Mucosa of descending colon (tissue), 3 donors: ENCODE measurements at regions of chr17 and their contacts with region 1.

Region 1: DNA sequence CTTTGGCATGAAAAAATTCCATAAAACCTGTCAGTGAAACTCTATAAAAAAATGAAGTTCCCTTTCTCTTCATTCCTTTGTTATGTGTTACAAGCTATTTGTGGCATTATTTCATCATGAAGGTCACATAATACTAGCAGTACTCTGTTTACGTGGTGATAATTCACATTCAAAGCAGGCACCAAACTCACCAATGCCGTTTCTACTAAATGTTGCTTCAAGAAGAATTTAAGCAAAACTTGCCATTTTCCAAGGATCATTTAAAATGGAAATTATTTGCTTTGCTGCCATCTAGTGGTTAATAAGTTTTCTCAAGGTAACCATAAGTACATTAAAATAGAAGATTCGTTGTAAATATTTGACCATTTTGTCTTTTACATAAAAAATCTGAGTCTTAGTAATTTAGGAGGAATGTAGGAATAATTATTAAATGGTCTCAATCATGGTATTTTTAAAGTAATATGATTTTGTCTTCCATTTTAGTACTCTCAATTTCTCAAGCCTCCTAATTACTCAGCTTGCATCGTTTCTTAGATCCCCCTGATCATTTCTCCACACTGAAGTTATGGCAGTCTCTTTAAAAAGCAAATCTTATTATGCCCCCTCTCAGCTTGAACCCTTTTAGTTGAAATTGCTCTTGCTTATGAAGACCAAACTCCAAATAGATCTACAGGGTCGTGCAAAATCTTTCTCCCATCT is 80.8 kb downstream of the OMG start:
- DNase-seq: no peak
- ATAC-seq: no peak
- H3K4me3 ChIP-seq: no peak overlapping the region
- H3K4me1 ChIP-seq: no peaks in the 10 kb centered on the region
- CTCF ChIP-seq: no peak

Region 2: GRCh38 chr17:31013844-31014243 is 202.4 kb before region 1 on chr17:
- intact Hi-C with region 1: loop called (anchors 5 kb)
- DNase-seq: no peak
- ATAC-seq: no peak
- H3K4me3 ChIP-seq: no peak overlapping the region
- H3K4me1 ChIP-seq: no peaks in the 10 kb centered on the region
- CTCF ChIP-seq: no peak

Region 3: GRCh38 chr17:31433091-31433790 is 217.0 kb after region 1 on chr17:
- intact Hi-C with region 1: no loop called
- DNase-seq: peak in 1 of 3 donors; percentile 40
- ATAC-seq: no peak
- H3K4me3 ChIP-seq: no peak overlapping the region
- H3K4me1 ChIP-seq: no peaks in the 10 kb centered on the region
- CTCF ChIP-seq: no peak